MCF 10A (cell line): ENCODE measurements at regions of chr10 and their contacts with region 1.

Region 1: GRCh38 chr10:97792141-97792721 is 20.4 kb upstream of the SFRP5 start:
- DNase-seq: peak; percentile 73
- H3K4me3 Mint-ChIP-seq: no peak overlapping the region
- H3K27ac Mint-ChIP-seq: no peak overlapping the region
- H3K4me1 Mint-ChIP-seq: no peaks in the 10 kb centered on the region
- H3K27me3 Mint-ChIP-seq: peaks cover 14% of the 10 kb centered on the region
- CTCF ChIP-seq: peak; percentile 96

Region 2: DNA sequence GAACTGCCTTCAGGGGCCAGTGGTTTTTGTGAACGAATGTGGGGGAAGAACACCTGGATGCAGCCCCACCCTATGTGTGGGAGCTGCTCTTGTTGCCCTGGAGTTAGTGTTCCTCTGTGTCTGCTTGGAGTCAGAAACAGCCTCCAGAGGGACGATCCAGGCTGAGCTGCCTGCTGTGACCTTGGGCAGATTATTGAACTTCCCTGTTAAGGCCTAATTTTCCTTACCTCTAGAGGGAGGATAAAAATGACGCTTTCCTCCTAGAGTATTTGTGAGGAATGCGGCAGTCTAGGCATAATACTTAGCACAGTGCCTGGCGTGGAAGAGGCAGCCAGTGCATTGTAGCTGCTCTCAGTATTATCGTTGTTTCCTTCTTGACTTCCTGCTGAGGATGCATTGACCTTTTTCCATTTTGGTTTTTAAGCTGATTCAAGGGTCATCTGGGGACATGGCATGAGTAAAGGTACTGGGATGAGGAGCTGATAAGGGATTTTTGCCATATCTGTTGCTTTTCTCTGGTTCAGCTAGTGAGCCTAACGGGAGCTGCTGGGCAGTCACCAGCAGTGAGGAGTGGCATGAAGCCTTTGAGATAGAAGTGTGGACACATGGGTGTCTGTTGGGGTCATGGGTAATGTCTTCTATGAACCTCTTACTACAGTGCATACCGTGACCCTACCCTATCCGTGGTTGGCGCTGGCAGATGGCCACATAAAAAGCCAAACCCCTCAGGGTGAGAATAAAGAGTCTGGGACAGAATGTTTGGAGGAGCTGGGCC is 48.9 kb before region 1 on chr10:
- CTCF ChIA-PET with region 1: interaction called, 24 read pairs
- POLR2A ChIA-PET with region 1: no interaction called
- intact Hi-C with region 1: no loop called
- DNase-seq: no peak
- H3K4me3 Mint-ChIP-seq: no peak overlapping the region
- H3K27ac Mint-ChIP-seq: peak overlapping the region; percentile 3
- H3K4me1 Mint-ChIP-seq: peaks cover 28% of the 10 kb centered on the region
- H3K27me3 Mint-ChIP-seq: no peaks in the 10 kb centered on the region
- CTCF ChIP-seq: no peak

Region 3: DNA sequence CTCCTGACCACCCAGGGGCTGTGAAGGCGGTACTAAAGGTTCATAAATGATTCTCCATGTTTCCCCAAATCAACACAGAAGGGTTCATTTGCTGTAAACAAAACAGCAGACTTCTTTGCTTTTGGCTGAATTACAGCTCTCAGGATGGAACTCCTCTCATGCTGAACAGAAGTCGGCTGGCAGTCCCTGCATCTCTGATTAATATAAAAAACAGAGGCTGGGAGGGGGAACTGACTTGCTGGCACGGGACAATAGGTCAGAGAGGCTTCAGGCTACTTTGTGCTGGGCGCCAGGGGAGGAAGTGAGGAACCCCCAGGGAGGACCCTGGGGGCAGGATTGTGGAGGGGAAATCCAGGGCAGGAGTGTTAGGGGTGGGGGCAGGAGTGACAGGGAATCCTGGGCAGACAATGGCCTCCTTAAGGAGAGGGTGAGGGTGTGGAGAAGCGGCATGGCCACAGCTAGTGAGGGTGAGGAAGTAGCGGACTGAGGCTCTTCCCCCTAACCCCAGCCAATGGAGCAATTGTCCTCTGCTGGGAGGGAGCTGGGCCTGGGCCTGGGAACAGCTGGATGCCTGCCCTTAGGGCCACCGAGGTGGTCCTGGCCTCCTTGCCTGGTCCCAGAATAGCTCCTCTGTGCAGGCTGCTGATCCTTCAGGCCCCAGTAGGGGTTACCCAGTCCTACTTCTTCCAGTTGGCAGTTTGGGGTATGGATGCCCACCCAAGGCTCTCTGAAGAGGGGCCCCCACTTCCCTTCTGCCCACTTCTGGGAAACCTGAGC is 11.2 kb before region 1 on chr10:
- CTCF ChIA-PET with region 1: interaction called, 29 read pairs
- POLR2A ChIA-PET with region 1: no interaction called
- intact Hi-C with region 1: no loop called
- DNase-seq: no peak
- H3K4me3 Mint-ChIP-seq: no peak overlapping the region
- H3K27ac Mint-ChIP-seq: no peak overlapping the region
- H3K4me1 Mint-ChIP-seq: no peaks in the 10 kb centered on the region
- H3K27me3 Mint-ChIP-seq: no peaks in the 10 kb centered on the region
- CTCF ChIP-seq: no peak

Region 4: DNA sequence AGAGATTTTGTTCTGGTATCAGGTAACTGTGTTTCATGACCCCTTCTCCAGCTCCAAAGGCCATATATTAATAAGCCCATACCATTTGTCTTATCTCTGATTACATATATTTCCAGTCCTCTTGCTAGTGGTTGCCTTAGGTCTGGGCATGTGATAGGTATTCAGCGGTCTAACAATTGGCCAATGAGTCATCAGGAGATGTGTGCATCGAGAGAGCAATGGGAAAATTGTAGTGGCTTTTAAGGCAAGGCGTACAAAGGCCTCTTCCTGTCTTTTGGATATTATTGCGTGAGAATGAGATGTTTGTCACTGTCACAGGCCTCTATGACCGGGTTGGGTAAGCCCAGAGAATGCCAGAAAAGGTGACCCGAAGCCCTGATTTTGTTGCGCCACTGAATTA is 18.2 kb after region 1 on chr10:
- CTCF ChIA-PET with region 1: interaction called, 83 read pairs
- POLR2A ChIA-PET with region 1: no interaction called
- intact Hi-C with region 1: no loop called
- DNase-seq: peak; percentile 63
- H3K4me3 Mint-ChIP-seq: no peak overlapping the region
- H3K27ac Mint-ChIP-seq: no peak overlapping the region
- H3K4me1 Mint-ChIP-seq: peaks cover 12% of the 10 kb centered on the region
- H3K27me3 Mint-ChIP-seq: no peaks in the 10 kb centered on the region
- CTCF ChIP-seq: no peak

Region 5: GRCh38 chr10:97869091-97870042 is 77.1 kb after region 1 on chr10:
- CTCF ChIA-PET with region 1: interaction called, 422 read pairs
- POLR2A ChIA-PET with region 1: interaction called, 3 read pairs
- intact Hi-C with region 1: loop called (anchors 1 kb)
- DNase-seq: peak; percentile 93
- H3K4me3 Mint-ChIP-seq: no peak overlapping the region
- H3K27ac Mint-ChIP-seq: no peak overlapping the region
- H3K4me1 Mint-ChIP-seq: no peaks in the 10 kb centered on the region
- H3K27me3 Mint-ChIP-seq: no peaks in the 10 kb centered on the region
- CTCF ChIP-seq: peak; percentile 83

Region 6: DNA sequence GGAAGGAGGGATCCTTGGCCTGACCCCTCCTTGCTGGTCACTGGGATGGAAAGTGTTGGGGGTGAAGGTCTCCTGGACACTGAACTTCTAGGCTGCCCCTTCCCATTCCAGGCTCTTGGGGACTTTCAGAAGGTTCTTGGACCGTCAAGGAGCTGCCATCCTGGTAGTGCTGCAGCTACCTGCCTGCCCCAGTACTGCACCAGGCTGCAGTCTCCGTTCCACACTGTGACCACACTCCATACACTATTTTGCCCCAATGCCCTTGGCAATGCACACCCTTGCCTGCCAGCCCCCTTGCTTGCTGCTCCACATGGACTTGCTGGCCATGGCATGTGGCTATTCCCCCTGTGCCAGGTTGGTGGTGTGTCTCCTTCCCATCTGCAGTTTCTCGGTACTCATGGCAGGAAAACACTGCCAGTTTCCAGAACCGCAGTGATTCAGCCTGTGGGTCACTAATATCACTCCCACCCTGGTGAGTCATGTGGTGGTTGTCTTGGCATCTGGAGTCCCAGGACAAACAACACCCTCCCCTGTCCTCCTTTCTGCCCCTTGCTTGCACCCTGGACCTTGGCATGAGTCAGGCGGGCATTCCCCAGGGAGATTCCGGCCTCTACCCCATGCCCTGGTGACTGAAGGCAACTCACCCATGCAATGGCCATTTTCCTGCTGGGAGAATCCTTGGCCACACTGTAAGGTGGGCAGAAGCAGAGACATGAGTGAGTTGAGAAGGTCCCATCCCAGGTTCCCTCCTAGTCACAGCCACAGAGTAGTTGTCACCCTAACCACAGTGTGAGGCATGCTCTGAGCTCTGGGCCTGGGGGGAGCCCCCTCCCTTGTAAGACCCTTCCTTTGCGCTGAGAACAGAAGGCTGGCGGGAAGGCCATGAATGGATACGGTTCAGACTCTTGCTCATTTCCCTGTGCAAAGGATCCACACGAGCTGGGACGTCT is 90.2 kb after region 1 on chr10:
- CTCF ChIA-PET with region 1: interaction called, 24 read pairs
- POLR2A ChIA-PET with region 1: no interaction called
- intact Hi-C with region 1: no loop called
- DNase-seq: peak; percentile 98
- H3K4me3 Mint-ChIP-seq: peak overlapping the region; percentile 8
- H3K27ac Mint-ChIP-seq: peak overlapping the region; percentile 62
- H3K4me1 Mint-ChIP-seq: peaks cover 14% of the 10 kb centered on the region
- H3K27me3 Mint-ChIP-seq: no peaks in the 10 kb centered on the region
- CTCF ChIP-seq: no peak

Region 7: GRCh38 chr10:98045785-98046389 is 253.7 kb after region 1 on chr10:
- CTCF ChIA-PET with region 1: interaction called, 29 read pairs
- POLR2A ChIA-PET with region 1: no interaction called
- intact Hi-C with region 1: loop called (anchors 2 kb)
- DNase-seq: peak; percentile 79
- H3K4me3 Mint-ChIP-seq: no peak overlapping the region
- H3K27ac Mint-ChIP-seq: no peak overlapping the region
- H3K4me1 Mint-ChIP-seq: peaks cover 5% of the 10 kb centered on the region
- H3K27me3 Mint-ChIP-seq: peaks cover 56% of the 10 kb centered on the region
- CTCF ChIP-seq: peak; percentile 77